Activated CD4-positive, alpha-beta T cell treated with anti-CD3 and anti-CD28 coated beads, Interleukin-2, amount 10 ng/mL, durations not matched to agents 24 days and 14 days (primary cell): ENCODE measurements at regions of chr6 and their contacts with region 1.

Region 1: DNA sequence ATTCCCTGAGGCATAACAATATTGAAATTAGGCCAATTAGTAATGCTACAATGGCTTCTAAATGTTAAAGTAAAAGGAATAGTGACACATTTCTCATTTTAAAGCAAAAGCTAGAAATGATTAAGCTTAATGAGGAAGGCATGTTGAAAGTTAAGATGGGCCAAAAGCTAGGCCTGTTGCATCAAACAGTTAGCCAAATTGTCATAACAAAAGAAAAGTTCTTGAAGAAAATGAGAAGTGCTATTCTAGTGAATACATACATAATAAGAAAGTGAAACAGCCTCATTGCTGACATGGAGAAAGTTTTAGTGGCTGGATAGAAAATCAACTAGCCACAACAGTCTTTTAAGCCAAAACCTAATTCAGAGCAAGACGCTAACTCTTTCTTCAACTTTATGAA is 12.9 kb downstream of the OR2A4 start:
- DNase-seq: no peak
- H3K4me3 Mint-ChIP-seq: no peak overlapping the region
- H3K27ac Mint-ChIP-seq: peak overlapping the region; percentile 9
- H3K4me1 Mint-ChIP-seq: peaks cover 9% of the 10 kb centered on the region
- H3K27me3 Mint-ChIP-seq: peaks cover 2% of the 10 kb centered on the region

Region 2: GRCh38 chr6:131640100-131640499 is 48.2 kb before region 1 on chr6:
- intact Hi-C with region 1: loop called (anchors 1 kb)
- DNase-seq: no peak
- H3K4me3 Mint-ChIP-seq: no peak overlapping the region
- H3K27ac Mint-ChIP-seq: peak overlapping the region; percentile 75
- H3K4me1 Mint-ChIP-seq: peaks cover 1% of the 10 kb centered on the region
- H3K27me3 Mint-ChIP-seq: no peaks in the 10 kb centered on the region